ENCODE measurements at regions of chr4 and their contacts with region 1.

Region 1: GRCh38 chr4:173257732-173258717 is 76.1 kb downstream of the HMGB2 start:
- DNase-seq: peak; percentile 69
- ATAC-seq: peak; percentile 85
- H3K4me3 Mint-ChIP-seq: no peak overlapping the region
- H3K27ac Mint-ChIP-seq: no peak overlapping the region
- H3K4me1 Mint-ChIP-seq: no peaks in the 10 kb centered on the region
- H3K27me3 Mint-ChIP-seq: no peaks in the 10 kb centered on the region

Region 2: DNA sequence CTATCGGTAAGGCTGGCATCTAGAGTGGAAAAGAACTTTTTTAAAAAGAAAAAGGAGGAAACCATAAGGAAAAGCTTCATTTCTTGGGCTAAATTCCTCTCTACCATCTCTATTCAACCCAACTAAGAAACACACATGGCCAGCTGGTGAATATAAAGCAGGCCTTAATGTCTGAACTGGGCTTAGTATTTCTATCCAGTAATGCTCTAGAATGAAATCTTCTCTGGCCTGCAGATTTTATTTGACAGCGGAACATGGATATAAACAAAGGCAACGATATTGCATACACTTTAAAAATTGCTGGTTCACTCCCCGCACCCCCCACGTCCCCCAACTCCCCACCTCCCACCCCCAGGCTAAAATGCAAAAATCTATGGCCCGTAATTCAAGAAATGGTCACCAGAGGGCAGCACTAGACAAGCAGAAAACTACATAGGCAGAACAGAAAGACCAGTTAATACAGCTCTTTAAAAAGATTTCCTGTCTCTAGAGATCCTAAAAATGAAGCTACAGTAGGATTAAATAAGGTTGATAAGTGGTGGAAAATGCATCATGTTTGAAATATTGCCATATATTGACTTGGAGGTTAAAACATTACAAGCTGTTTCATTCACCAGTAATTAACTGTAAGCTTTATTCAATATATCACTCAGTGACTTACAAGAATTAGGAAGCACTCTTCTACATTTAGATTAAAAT is 244.6 kb before region 1 on chr4:
- CTCF ChIA-PET with region 1: interaction called, 42 read pairs
- DNase-seq: peak; percentile 54
- ATAC-seq: no peak
- H3K4me3 Mint-ChIP-seq: no peak overlapping the region
- H3K27ac Mint-ChIP-seq: no peak overlapping the region
- H3K4me1 Mint-ChIP-seq: no peaks in the 10 kb centered on the region
- H3K27me3 Mint-ChIP-seq: peaks cover 7% of the 10 kb centered on the region

Region 3: GRCh38 chr4:173211838-173212237 is 46.2 kb before region 1 on chr4:
- CTCF ChIA-PET with region 1: no interaction called
- DNase-seq: no peak
- ATAC-seq: no peak
- H3K4me3 Mint-ChIP-seq: no peak overlapping the region
- H3K27ac Mint-ChIP-seq: no peak overlapping the region
- H3K4me1 Mint-ChIP-seq: no peaks in the 10 kb centered on the region
- H3K27me3 Mint-ChIP-seq: no peaks in the 10 kb centered on the region

Region 4: GRCh38 chr4:173301518-173302201 is 43.6 kb after region 1 on chr4:
- CTCF ChIA-PET with region 1: interaction called, 12 read pairs
- DNase-seq: no peak
- ATAC-seq: peak; percentile 36
- H3K4me3 Mint-ChIP-seq: no peak overlapping the region
- H3K27ac Mint-ChIP-seq: no peak overlapping the region
- H3K4me1 Mint-ChIP-seq: peaks cover 3% of the 10 kb centered on the region
- H3K27me3 Mint-ChIP-seq: no peaks in the 10 kb centered on the region

Region 5: DNA sequence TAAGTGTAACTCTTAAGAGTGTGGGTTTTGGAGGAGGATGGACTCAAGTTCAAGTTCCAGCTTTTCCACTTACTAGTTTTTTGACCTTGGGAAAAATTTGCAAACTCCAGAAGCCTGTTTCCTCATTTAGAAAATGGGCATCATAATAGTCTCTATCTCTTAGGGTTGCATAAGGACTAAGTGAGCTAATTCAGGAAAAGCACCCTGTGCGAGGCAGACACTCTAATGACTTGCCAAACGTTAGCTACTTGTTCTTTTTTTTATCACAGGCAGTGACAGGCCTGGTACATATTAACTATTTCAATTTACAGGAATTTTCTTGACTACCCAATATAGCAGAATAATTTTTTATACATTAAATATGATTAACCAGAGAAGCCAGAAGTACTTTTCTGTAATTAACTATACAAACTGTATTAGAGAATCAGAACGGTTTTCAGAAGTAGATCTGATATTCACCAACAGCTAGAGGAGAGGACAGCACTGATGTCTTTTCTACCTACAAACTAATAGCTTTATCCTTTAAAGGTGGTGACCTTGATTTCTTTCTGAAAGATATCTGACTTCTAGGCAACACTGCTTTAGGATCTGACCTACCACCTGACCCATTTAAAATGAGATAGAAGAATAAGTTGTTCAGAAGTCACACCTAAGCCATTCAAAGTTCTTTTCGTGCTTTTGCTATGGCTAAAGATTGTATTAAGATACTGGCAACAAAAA is 411.6 kb after region 1 on chr4:
- CTCF ChIA-PET with region 1: no interaction called
- DNase-seq: no peak
- ATAC-seq: no peak
- H3K4me3 Mint-ChIP-seq: no peak overlapping the region
- H3K27ac Mint-ChIP-seq: no peak overlapping the region
- H3K4me1 Mint-ChIP-seq: no peaks in the 10 kb centered on the region
- H3K27me3 Mint-ChIP-seq: no peaks in the 10 kb centered on the region

Measured in activated CD8-positive, alpha-beta memory T cell treated with anti-CD3 and anti-CD28 coated beads, Interleukin-2, amount 10 ng/mL, durations not matched to agents 7 days and 5 days (primary cell).